ENCODE measurements at regions of chr3 and their contacts with region 1.

Region 1: DNA sequence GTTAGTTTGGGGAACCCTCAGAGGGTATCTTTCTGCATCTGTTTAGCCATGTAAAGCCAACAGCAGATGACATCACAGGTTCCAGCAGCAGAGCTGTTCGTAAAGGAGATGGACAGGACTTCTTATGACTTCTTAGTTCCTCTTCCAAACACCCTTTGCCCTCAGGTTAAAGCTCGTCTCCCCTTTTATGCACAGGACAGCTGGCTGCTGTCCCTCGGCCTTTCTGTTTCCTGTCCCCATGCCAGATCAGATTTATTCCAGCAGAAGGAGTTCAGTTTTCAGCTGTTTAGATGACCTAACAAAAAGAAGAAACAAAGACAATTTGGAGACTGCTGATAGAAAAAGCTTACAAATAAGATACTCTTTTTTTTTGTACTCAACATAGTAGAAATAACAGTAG is 45.1 kb downstream of the SEC22A start:
- DNase-seq: no peak
- H3K4me3 ChIP-seq: no peak overlapping the region
- CTCF ChIP-seq: no peak
- POLR2A ChIP-seq: no peak

Region 2: DNA sequence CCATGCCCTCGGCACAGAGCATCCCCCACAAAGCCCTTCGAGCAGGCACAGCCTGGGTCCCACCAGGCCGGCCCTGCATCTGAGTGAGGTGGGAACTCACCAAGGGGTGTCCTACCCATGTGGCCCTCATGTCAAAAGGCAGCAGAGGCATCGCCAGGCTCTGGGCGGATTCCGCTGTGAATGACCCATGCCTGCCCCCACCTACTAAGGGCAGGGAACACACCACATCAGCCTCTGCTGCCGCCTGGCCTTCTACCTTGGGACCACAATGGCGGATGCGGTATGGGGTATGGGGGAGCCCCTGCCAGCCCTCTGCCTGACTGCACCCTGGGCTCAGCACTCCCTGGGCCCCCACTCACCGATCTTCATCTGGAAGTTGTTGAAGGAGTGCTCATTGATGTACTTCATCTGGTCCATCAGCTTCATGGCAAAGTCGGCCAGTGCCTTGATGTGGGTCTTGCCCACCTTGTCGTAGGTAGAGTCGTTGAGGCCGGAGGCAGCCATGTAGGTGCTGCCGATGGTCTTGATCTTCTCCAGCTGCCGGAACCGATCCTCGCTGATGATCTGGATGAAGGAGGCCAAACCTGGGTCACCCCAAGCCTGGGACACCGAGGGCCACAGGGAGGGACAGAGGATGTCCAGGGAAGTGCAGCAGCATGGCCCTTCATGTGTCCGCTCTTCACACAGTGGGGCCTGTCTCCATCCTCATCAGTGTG is 42.7 kb after region 1 on chr3:
- intact Hi-C with region 1: loop called (anchors 2 kb)
- DNase-seq: peak in 1 of 2 donors; percentile 81
- H3K4me3 ChIP-seq: no peak overlapping the region
- CTCF ChIP-seq: no peak
- POLR2A ChIP-seq: no peak

Region 3: DNA sequence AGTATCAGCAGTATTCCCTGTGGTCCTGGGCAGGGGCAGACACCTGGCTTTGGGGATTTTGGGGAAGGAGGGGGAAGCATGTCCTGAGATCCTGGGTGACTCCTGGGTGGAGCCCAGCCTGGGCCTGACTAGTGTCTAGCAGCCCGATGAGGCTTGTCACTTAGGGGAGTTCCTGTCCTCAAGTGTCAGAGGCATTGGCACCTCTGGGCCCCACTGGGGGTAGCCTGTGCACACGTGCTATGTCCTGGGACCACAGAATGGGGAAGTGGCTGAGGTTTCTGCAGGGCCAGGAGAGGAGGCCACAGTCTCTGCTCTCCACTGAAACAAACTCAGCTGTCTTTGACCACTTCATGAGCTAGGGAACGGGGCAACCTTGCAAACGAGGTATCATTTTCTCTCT is 233.6 kb after region 1 on chr3:
- intact Hi-C with region 1: no loop called
- DNase-seq: peak in 1 of 2 donors; percentile 43
- H3K4me3 ChIP-seq: no peak overlapping the region
- CTCF ChIP-seq: no peak
- POLR2A ChIP-seq: no peak

Measured in lower leg skin (tissue), 4 donors.